B cell (primary cell): ENCODE measurements at regions of chr10 and their contacts with region 1.

Region 1: DNA sequence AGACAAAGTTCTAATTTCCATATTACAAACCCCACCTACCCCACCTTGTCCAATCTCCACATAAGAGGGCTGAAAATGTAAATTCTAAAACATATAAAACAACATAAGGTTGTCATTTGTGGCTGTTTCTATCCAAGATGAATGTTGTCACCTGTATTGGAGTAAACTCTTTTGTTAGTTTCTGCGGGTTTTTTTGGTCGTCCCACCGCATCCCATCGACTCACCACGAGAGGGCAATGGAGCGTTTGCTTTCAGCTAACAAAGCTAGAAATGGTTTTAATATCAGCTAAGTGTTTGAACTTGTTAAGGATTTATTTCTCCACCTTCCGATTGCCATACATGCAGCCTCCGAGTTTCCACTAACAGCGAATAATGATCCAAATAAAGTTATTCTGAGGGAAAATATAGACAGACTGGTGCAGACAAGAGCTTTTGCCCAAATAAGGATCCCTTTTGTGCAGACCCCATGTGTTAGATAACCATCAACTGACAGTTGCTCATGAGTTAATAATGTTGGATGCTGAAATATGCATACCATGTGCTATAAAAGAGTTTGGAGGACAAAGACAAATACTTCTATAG is 137.2 kb downstream of the ARID5B start:
- DNase-seq: peak; percentile 85
- ATAC-seq: peak; percentile 63
- H3K4me3 ChIP-seq: peak overlapping the region in 3 of 5 experiments; percentile 19 to 50 (median 27)
- H3K4me3 Mint-ChIP-seq: peak overlapping the region; percentile 74
- H3K27ac ChIP-seq: peak overlapping the region; percentile 59 to 84
- H3K27ac Mint-ChIP-seq: peak overlapping the region; percentile 87
- H3K4me1 ChIP-seq: peaks cover 74 to 81% of the 10 kb centered on the region in 2 donors
- H3K4me1 Mint-ChIP-seq: peaks cover 83% of the 10 kb centered on the region
- H3K27me3 ChIP-seq: no peaks in the 10 kb centered on the region
- H3K27me3 Mint-ChIP-seq: no peaks in the 10 kb centered on the region
- CTCF ChIP-seq: peak; percentile 89

Region 2: DNA sequence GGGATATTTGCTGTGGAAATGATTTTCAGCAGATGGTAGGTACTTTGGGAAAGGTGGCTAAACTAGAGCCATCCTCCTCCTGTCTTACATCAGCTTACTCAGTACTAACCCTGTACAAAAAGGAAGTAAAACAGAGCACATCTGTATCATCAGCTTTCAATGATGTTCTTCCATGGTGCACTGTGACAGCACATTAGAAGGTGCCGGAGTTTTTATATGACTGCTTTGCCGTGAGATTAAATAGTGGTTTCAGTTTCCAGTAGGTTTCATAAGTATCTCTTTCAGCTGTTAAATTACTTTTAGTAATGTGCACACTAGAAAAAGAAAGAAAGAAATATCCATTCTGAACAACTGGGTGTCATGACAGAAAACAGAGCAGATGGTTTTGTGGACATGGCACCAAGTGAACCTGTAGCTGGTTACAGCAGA is 50.7 kb before region 1 on chr10:
- CTCF ChIA-PET with region 1: interaction called, 18 read pairs
- POLR2A ChIA-PET with region 1: interaction called, 4 read pairs
- intact Hi-C with region 1: no loop called
- DNase-seq: peak; percentile 88
- ATAC-seq: peak; percentile 82
- H3K4me3 ChIP-seq: peak overlapping the region in 1 of 5 experiments; percentile 29
- H3K4me3 Mint-ChIP-seq: peak overlapping the region; percentile 88
- H3K27ac ChIP-seq: peak overlapping the region; percentile 84 to 88
- H3K27ac Mint-ChIP-seq: peak overlapping the region; percentile 99
- H3K4me1 ChIP-seq: peaks cover 47 to 61% of the 10 kb centered on the region in 2 donors
- H3K4me1 Mint-ChIP-seq: peaks cover 82% of the 10 kb centered on the region
- H3K27me3 ChIP-seq: no peaks in the 10 kb centered on the region
- H3K27me3 Mint-ChIP-seq: no peaks in the 10 kb centered on the region
- CTCF ChIP-seq: no peak

Region 3: GRCh38 chr10:62016623-62017490 is 21.8 kb before region 1 on chr10:
- CTCF ChIA-PET with region 1: interaction called, 131 read pairs
- POLR2A ChIA-PET with region 1: no interaction called
- intact Hi-C with region 1: loop called (anchors 2 kb)
- DNase-seq: peak; percentile 88
- ATAC-seq: peak; percentile 71
- H3K4me3 ChIP-seq: peak overlapping the region in 3 of 5 experiments; percentile 10 to 50 (median 11)
- H3K4me3 Mint-ChIP-seq: peak overlapping the region; percentile 76
- H3K27ac ChIP-seq: peak overlapping the region; percentile 94 to 98
- H3K27ac Mint-ChIP-seq: peak overlapping the region; percentile 93
- H3K4me1 ChIP-seq: peaks cover 75 to 76% of the 10 kb centered on the region in 2 donors
- H3K4me1 Mint-ChIP-seq: peaks cover 80% of the 10 kb centered on the region
- H3K27me3 ChIP-seq: no peaks in the 10 kb centered on the region
- H3K27me3 Mint-ChIP-seq: no peaks in the 10 kb centered on the region
- CTCF ChIP-seq: no peak

Region 4: GRCh38 chr10:62082729-62083411 is 44.2 kb after region 1 on chr10:
- CTCF ChIA-PET with region 1: interaction called, 19 read pairs
- POLR2A ChIA-PET with region 1: interaction called, 5 read pairs
- intact Hi-C with region 1: loop called (anchors 10 kb)
- DNase-seq: no peak
- ATAC-seq: peak; percentile 29
- H3K4me3 ChIP-seq: peak overlapping the region; percentile 10 to 38 (median 36)
- H3K4me3 Mint-ChIP-seq: peak overlapping the region; percentile 79
- H3K27ac ChIP-seq: peak overlapping the region; percentile 90 to 91
- H3K27ac Mint-ChIP-seq: peak overlapping the region; percentile 86
- H3K4me1 ChIP-seq: peaks cover 76 to 78% of the 10 kb centered on the region in 2 donors
- H3K4me1 Mint-ChIP-seq: peaks cover 79% of the 10 kb centered on the region
- H3K27me3 ChIP-seq: no peaks in the 10 kb centered on the region
- H3K27me3 Mint-ChIP-seq: no peaks in the 10 kb centered on the region
- CTCF ChIP-seq: no peak

Region 5: GRCh38 chr10:62268399-62269114 is 229.9 kb after region 1 on chr10 and contains the start of gene RTKN2:
- CTCF ChIA-PET with region 1: interaction called, 15 read pairs
- POLR2A ChIA-PET with region 1: no interaction called
- intact Hi-C with region 1: no loop called
- DNase-seq: peak; percentile 81
- ATAC-seq: peak; percentile 90
- H3K4me3 ChIP-seq: peak within 1 kb of the TSS; percentile 51 to 73 (median 68)
- H3K4me3 Mint-ChIP-seq: peak within 1 kb of the TSS; percentile 92
- H3K27ac ChIP-seq: peak within 1 kb of the TSS in 1 of 2 donors; percentile 25
- H3K27ac Mint-ChIP-seq: no peak within 1 kb of the TSS
- H3K4me1 ChIP-seq: peaks cover 14 to 15% of the 10 kb centered on the region in 2 donors
- H3K4me1 Mint-ChIP-seq: peaks cover 11% of the 10 kb centered on the region
- H3K27me3 ChIP-seq: peaks cover 0 to 17% (median 9%) of the 10 kb centered on the region in 4 experiments
- H3K27me3 Mint-ChIP-seq: peaks cover 14% of the 10 kb centered on the region
- CTCF ChIP-seq: no peak
- total RNA-seq, gene RTKN2: 0.22 and 0.53 TPM in 2 replicates